Natural killer cell (primary cell): ENCODE measurements at regions of chr5 and their contacts with region 1.

Region 1: DNA sequence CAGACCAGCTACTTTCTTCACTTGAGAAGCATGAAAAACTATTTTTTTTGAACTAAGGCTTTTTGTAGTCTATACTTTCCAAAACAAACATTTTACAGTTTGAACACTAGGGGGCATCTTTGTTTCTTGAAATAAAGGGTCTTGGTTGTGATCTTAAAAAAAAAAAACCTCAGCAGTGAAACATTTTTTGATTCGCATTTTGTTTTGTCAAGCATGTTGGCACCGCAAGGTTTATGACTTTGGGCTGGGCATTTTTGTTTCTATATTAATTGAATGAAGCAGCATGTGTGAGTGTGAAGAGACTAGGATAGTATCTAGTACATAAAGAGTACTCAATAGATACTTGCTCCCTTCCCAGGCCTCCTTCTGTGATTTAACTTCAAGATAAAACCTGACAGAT is 31.6 kb upstream of the ACOT12 start:
- DNase-seq: peak in 1 of 2 donors; percentile 61
- ATAC-seq: peak in 2 of 3 donors; percentile 42 to 57
- H3K4me3 ChIP-seq: no peak overlapping the region
- H3K4me3 Mint-ChIP-seq: no peak overlapping the region
- H3K27ac ChIP-seq: no peak overlapping the region
- H3K27ac Mint-ChIP-seq: no peak overlapping the region
- H3K4me1 ChIP-seq: no peaks in the 10 kb centered on the region
- H3K4me1 Mint-ChIP-seq: peaks cover 5 to 6% of the 10 kb centered on the region in 2 donors
- H3K27me3 ChIP-seq: no peaks in the 10 kb centered on the region
- H3K27me3 Mint-ChIP-seq: no peaks in the 10 kb centered on the region
- CTCF ChIP-seq: peak; percentile 71

Region 2: DNA sequence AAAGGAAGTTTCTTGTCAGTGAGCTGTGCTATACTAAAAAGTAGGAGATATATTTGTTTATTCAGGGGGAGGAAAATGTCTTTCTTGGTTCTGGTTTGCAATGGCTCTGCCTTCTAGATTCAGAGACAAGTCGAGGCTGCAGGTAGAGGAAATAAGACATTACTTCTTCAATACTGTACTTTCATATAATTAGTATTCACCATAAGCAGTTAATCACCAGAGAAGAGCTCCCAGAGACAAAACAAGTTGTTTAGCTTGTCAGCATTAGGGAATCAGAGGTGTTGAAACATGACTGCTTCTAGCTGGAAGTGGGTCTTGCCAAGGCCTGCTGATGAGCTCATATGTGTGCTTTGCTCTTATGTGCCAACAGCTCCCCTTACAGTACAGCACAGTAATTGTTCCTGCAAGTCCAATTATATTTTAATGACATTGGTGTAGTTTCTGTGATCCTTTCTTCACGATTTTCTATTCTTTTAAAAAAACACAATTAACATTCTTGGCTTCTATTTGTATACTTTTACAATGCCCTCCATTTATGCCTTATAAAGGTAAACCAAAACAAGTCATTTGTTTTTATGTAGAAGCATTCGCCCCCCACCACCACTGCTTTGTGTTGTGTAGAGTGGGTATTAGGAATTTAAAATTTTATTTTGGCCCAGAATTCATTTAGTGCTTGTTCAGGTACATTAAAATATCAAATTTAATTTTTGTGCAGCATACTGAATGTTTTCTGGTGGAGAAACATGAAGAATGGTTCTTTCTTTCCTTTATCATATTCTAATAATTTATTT is 740.4 kb after region 1 on chr5:
- intact Hi-C with region 1: loop called (anchors 1 kb)
- DNase-seq: peak in 1 of 2 donors; percentile 77
- ATAC-seq: peak; percentile 78 to 100 (median 80)
- H3K4me3 ChIP-seq: no peak overlapping the region
- H3K4me3 Mint-ChIP-seq: no peak overlapping the region
- H3K27ac ChIP-seq: no peak overlapping the region
- H3K27ac Mint-ChIP-seq: no peak overlapping the region
- H3K4me1 ChIP-seq: no peaks in the 10 kb centered on the region
- H3K4me1 Mint-ChIP-seq: no peaks in the 10 kb centered on the region
- H3K27me3 ChIP-seq: no peaks in the 10 kb centered on the region
- H3K27me3 Mint-ChIP-seq: no peaks in the 10 kb centered on the region
- CTCF ChIP-seq: peak; percentile 58

Region 3: GRCh38 chr5:82225525-82226172 is 800.1 kb after region 1 on chr5:
- intact Hi-C with region 1: loop called (anchors 1 kb)
- DNase-seq: peak; percentile 39 to 81
- ATAC-seq: peak; percentile 71 to 90 (median 90)
- H3K4me3 ChIP-seq: no peak overlapping the region
- H3K4me3 Mint-ChIP-seq: no peak overlapping the region
- H3K27ac ChIP-seq: no peak overlapping the region
- H3K27ac Mint-ChIP-seq: no peak overlapping the region
- H3K4me1 ChIP-seq: peaks cover 4% of the 10 kb centered on the region
- H3K4me1 Mint-ChIP-seq: peaks cover 5 to 10% of the 10 kb centered on the region in 2 donors
- H3K27me3 ChIP-seq: no peaks in the 10 kb centered on the region
- H3K27me3 Mint-ChIP-seq: no peaks in the 10 kb centered on the region
- CTCF ChIP-seq: peak; percentile 89